ENCODE measurements at regions of chr20 and their contacts with region 1.

Region 1: DNA sequence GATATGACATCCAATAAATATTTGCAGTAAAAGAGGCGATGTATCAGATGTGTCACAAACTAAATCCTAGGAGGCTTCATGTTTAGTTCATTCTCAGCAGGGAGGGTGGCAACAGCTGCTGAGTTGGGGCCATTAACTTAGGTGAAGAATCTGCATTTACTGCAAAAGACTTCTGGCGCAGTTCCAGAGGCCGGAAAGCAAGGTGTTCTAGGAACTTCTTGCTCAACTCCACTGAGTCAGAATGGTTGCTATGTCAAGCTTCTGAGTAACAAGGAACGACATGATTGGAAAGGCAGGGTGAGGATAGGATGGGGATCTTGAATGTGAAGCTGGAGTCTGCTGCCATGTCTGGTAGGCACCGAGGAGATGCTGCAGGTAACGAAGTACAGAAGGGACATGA is 11.7 kb downstream of the ADNP start:
- DNase-seq: no peak
- H3K4me3 ChIP-seq: no peak overlapping the region
- CTCF ChIP-seq: no peak

Region 2: GRCh38 chr20:50834599-50835005 is 85.0 kb before region 1 on chr20:
- in situ Hi-C with region 1: loop called (anchors 5 kb)
- DNase-seq: peak; percentile 97
- H3K4me3 ChIP-seq: no peak overlapping the region
- CTCF ChIP-seq: no peak